Spleen (tissue), 13 donors: ENCODE measurements at regions of chr17 and their contacts with region 1.

Region 1: DNA sequence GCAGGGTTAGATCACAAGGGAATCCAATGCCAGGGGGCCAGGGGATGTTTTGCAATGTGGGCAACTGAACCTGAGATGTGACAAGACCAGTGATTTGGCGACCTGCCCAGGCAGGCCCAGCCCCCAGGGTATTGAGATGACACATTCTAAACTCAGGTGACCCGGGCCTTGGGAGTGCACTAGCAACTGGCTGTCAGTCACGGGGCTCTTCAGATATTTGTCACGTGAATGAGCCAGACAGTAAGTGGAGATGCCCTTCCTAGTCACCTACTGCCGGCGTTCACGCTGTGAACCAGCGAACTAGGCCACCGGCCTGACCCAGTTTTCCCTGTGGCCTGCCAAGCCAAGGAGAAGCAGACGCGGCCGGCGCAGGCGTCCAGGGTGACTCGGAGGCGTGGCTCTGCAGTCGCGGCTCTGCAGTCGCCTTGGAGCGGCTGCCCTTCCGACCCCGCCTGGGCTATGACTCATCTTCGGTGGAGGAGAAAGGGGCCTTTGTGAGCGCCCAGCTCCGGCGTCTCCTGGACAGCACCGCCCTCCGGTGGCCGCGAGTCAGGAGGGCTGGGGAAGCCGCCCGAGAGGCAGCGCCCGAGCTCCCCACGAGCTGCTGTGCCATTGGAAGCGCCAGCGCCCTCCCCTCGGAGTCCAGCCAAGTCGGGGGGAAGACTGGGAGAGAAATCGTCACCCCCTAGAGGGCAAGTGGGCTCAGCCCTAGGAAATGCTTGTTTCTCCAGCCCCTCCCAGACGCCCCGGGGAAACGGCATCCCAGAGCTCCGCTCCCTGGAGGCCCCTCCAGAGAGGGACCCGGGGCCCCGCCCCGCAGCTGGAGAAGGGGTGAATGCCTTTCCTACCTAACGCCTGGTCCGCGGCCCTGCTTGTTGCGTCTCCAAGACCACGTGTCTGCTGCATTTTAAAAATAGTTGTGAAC is 38.8 kb downstream of the WSB1 start:
- DNase-seq: peak; percentile 99
- H3K4me3 ChIP-seq: peak overlapping the region; percentile 24 to 70 (median 40)
- H3K27ac ChIP-seq: peak overlapping the region; percentile 77 to 93 (median 87)
- H3K4me1 ChIP-seq: peaks cover 5 to 38% (median 21%) of the 10 kb centered on the region in 6 donors
- H3K27me3 ChIP-seq: no peaks in the 10 kb centered on the region
- CTCF ChIP-seq: peak; percentile 89 to 98 (median 92)
- POLR2A ChIP-seq: no peak

Region 2: GRCh38 chr17:27236717-27237315 is 95.9 kb before region 1 on chr17:
- intact Hi-C with region 1: loop called (anchors 5 kb)
- DNase-seq: no peak
- H3K4me3 ChIP-seq: no peak overlapping the region
- H3K27ac ChIP-seq: peak overlapping the region in 1 of 8 donors; percentile 97
- H3K4me1 ChIP-seq: peaks cover 8 to 62% (median 23%) of the 10 kb centered on the region in 6 donors
- H3K27me3 ChIP-seq: no peaks in the 10 kb centered on the region
- CTCF ChIP-seq: peak; percentile 90 to 97 (median 95)
- POLR2A ChIP-seq: no peak

Region 3: GRCh38 chr17:27473748-27474609 is 141.2 kb after region 1 on chr17:
- intact Hi-C with region 1: no loop called
- DNase-seq: no peak
- H3K4me3 ChIP-seq: peak overlapping the region in 1 of 8 donors; percentile 41
- H3K27ac ChIP-seq: peak overlapping the region; percentile 68 to 87 (median 82)
- H3K4me1 ChIP-seq: peaks cover 23 to 86% (median 69%) of the 10 kb centered on the region in 6 donors
- H3K27me3 ChIP-seq: no peaks in the 10 kb centered on the region
- CTCF ChIP-seq: no peak
- POLR2A ChIP-seq: no peak